Left cardiac atrium (tissue), 4 donors: ENCODE measurements at regions of chr7 and their contacts with region 1.

Region 1: GRCh38 chr7:122790132-122790531 is 87.4 kb upstream of the RNF148 start:
- DNase-seq: no peak
- ATAC-seq: no peak

Region 2: DNA sequence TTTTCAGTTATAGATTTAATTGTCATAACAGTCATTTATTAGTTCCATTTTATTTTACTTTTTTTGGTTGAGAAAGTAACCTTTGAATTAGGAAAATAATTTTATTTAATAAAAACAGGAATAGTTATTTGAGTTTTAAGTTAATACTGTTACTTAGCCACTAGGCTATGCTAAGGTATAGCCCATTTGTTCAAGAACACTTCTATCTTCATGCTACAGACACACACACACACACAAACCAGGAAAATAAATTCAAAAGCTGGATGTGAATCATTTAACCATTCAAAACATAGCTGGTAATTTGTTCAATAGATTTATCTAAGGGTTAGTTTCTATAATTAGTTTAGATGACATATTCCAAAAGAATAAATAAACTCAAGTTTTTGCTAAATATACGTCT is 239.6 kb before region 1 on chr7:
- intact Hi-C with region 1: loop called in 1 of 2 experiments (anchors 10 kb)
- DNase-seq: no peak
- ATAC-seq: no peak

Region 3: GRCh38 chr7:123231027-123232000 is 441.2 kb after region 1 on chr7:
- intact Hi-C with region 1: no loop called
- DNase-seq: no peak
- ATAC-seq: no peak